Dorsolateral prefrontal cortex (tissue), 120 donors: ENCODE measurements at regions of chr2 and their contacts with region 1.

Region 1: GRCh38 chr2:108637304-108637669 is 82.0 kb upstream of the RANBP2 start:
- DNase-seq: peak in 2 of 10 donors; percentile 17 to 38
- H3K4me3 ChIP-seq: peak overlapping the region in 1 of 59 donors; percentile 18
- H3K27ac ChIP-seq: peak overlapping the region in 44 of 59 donors; percentile 1 to 77 (median 57)
- H3K27me3 ChIP-seq: no peaks in the 10 kb centered on the region
- CTCF ChIP-seq: peak in 1 of 56 donors; percentile 18

Region 2: GRCh38 chr2:108604196-108604595 is 33.1 kb before region 1 on chr2:
- intact Hi-C with region 1: loop called in 1 of 2 experiments (anchors 5 kb)
- DNase-seq: no peak
- H3K4me3 ChIP-seq: no peak overlapping the region
- H3K27ac ChIP-seq: no peak overlapping the region
- H3K27me3 ChIP-seq: no peaks in the 10 kb centered on the region
- CTCF ChIP-seq: no peak